Activated CD4-positive, alpha-beta memory T cell treated with anti-CD3 and anti-CD28 coated beads for 36 hours (primary cell): ENCODE measurements at regions of chr2 and their contacts with region 1.

Region 1: GRCh38 chr2:219388127-219388844 is 574 bp upstream of the DNPEP start:
- DNase-seq: peak; percentile 99
- H3K4me3 Mint-ChIP-seq: peak overlapping the region; percentile 69
- H3K27ac Mint-ChIP-seq: peak overlapping the region; percentile 66
- H3K4me1 Mint-ChIP-seq: peaks cover 16% of the 10 kb centered on the region
- H3K27me3 Mint-ChIP-seq: no peaks in the 10 kb centered on the region

Region 2: DNA sequence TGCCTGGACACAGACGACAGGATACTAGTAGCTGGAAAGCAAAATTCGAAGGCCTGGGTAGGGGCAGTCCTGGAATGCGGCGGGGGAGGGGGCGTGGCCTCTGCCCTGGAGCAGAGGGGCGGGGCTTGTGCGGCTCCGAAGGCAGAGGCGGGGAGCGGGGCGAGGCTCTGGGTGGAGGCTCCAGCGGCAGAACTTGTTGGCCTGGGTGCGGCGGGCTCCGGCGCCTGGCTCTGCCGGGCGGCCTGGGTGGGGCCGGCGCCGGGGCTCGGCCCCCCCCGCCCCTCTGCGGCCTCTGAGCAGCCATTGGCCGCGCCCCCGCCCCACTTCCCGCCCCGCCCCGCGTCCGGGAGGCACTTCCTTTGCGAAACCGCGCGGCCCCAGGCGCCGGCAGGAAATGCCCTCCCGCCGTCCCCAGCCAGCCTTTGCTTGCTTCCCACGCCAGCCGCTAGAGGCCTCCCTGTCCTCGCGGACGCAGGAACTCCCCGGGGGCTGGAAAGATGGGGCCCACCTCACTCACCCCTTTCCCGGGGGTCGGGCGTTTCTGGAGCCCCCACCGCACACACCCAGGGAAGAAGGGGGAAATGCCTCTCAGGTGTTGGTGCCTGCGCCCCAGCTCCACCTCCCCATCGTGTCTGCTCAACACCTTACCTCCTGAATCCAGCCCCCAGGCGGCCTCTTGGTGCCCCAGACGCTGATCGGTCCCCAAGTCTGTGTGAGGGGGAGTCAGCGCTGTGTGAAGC is 981.9 kb before region 1 on chr2:
- CTCF ChIA-PET with region 1: no interaction called
- POLR2A ChIA-PET with region 1: no interaction called
- intact Hi-C with region 1: loop called (anchors 5 kb)
- DNase-seq: peak; percentile 97
- H3K4me3 Mint-ChIP-seq: peak overlapping the region; percentile 71
- H3K27ac Mint-ChIP-seq: peak overlapping the region; percentile 81
- H3K4me1 Mint-ChIP-seq: peaks cover 42% of the 10 kb centered on the region
- H3K27me3 Mint-ChIP-seq: peaks cover 5% of the 10 kb centered on the region

Region 3: DNA sequence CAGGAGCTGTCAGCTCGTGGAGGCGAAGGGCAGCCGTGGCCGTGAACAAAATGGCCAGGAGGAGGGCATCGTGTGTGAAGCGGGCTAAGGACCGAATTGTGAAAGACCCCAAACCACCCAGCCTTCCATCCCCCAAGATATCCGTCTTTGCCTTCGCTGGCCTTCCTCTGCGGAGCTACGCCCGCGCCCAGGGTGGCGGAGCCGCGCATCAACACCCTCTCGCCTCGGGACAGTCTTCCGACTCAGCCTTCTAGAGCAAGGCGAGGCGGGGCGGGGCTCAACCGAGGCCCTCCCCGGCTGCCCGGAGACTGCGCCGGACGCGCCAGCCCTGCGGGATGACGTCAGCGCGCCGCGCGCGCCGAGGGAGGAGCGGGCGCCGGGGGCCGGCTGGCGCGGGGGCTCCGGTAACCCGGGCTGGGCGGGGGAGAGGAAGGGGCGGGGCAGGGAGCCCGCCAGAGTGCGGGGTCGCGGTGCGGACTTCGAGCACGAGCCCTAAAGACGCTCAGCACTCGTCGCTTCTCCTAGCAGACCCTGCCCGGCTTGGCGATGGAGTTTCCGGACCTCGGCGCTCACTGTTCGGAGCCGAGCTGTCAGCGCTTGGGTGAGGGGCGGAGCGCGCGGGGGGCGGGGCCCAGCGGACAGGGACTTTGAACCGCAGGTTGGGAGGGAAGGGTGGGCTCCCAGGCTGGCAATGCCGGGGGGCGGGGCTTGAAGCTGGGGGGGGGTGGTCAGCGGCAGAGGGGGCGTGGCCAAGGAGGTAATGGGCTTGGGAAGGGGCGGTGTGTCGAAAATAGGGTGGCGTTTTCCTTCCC is 181.6 kb before region 1 on chr2 and contains the start of gene ZFAND2B:
- CTCF ChIA-PET with region 1: interaction called, 3 read pairs
- POLR2A ChIA-PET with region 1: interaction called, 3 read pairs
- intact Hi-C with region 1: loop called (anchors 1 kb)
- DNase-seq: peak; percentile 95
- H3K4me3 Mint-ChIP-seq: peak within 1 kb of the TSS; percentile 94
- H3K27ac Mint-ChIP-seq: peak within 1 kb of the TSS; percentile 99
- H3K4me1 Mint-ChIP-seq: peaks cover 32% of the 10 kb centered on the region
- H3K27me3 Mint-ChIP-seq: no peaks in the 10 kb centered on the region
- total RNA-seq, gene ZFAND2B: 31.9 to 34.4 TPM

Region 4: DNA sequence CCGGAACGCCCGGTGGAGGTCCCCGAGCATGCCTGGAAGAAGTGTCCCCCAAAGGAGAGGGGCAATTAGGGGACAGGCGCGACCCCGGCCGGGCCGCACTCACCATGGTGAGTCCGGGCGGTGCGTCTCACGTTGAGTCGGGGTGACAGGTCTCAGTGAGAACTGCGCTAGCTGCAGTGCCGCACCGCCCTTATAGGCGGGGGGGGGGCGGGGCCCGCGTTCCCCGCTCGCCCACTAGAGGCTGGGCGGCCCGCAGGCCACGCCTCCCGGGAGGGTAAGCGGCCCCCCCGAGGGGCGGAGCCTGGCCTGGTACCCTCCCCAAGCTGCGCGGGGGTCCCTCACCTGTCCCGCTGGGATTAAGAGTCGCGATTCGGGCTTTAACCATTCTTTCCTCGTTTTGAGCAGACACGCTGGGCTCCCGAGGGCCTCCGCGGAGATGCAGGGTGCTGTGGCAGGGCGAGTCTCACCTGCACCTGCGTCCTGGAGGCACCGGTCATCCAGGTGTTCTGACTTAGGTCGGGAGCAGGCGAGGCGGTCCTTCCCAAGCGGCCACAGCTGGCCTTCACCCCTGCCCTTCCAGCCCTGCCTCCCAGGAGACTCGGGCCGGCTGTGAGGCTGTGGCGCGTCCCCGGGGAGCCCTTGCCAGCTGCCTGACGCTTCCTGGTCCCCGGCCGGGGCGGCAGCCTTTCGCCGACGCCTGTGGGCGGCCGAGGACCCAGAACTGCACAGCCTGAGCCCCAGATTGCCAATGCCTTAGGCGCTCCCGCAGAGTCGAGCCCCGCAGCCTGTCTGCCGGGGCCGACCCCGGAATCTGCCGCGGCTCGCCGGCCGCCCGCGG is 134.3 kb before region 1 on chr2 and contains the start of gene TUBA4A:
- CTCF ChIA-PET with region 1: interaction called, 3 read pairs
- POLR2A ChIA-PET with region 1: interaction called, 5 read pairs
- intact Hi-C with region 1: loop called (anchors 1 kb)
- DNase-seq: peak; percentile 92
- H3K4me3 Mint-ChIP-seq: peak within 1 kb of the TSS; percentile 86
- H3K27ac Mint-ChIP-seq: peak within 1 kb of the TSS; percentile 97
- H3K4me1 Mint-ChIP-seq: peaks cover 49% of the 10 kb centered on the region
- H3K27me3 Mint-ChIP-seq: no peaks in the 10 kb centered on the region
- total RNA-seq, gene TUBA4A: 219 to 229 TPM

Region 5: GRCh38 chr2:219402665-219403515 is 14.6 kb after region 1 on chr2:
- CTCF ChIA-PET with region 1: interaction called, 20 read pairs
- POLR2A ChIA-PET with region 1: interaction called, 4 read pairs
- intact Hi-C with region 1: no loop called
- DNase-seq: peak; percentile 70
- H3K4me3 Mint-ChIP-seq: no peak overlapping the region
- H3K27ac Mint-ChIP-seq: no peak overlapping the region
- H3K4me1 Mint-ChIP-seq: no peaks in the 10 kb centered on the region
- H3K27me3 Mint-ChIP-seq: peaks cover 5% of the 10 kb centered on the region

Region 6: GRCh38 chr2:219430633-219431615 is 42.6 kb after region 1 on chr2:
- CTCF ChIA-PET with region 1: no interaction called
- POLR2A ChIA-PET with region 1: no interaction called
- intact Hi-C with region 1: no loop called
- DNase-seq: no peak
- H3K4me3 Mint-ChIP-seq: no peak overlapping the region
- H3K27ac Mint-ChIP-seq: no peak overlapping the region
- H3K4me1 Mint-ChIP-seq: no peaks in the 10 kb centered on the region
- H3K27me3 Mint-ChIP-seq: peaks cover 22% of the 10 kb centered on the region

Region 7: DNA sequence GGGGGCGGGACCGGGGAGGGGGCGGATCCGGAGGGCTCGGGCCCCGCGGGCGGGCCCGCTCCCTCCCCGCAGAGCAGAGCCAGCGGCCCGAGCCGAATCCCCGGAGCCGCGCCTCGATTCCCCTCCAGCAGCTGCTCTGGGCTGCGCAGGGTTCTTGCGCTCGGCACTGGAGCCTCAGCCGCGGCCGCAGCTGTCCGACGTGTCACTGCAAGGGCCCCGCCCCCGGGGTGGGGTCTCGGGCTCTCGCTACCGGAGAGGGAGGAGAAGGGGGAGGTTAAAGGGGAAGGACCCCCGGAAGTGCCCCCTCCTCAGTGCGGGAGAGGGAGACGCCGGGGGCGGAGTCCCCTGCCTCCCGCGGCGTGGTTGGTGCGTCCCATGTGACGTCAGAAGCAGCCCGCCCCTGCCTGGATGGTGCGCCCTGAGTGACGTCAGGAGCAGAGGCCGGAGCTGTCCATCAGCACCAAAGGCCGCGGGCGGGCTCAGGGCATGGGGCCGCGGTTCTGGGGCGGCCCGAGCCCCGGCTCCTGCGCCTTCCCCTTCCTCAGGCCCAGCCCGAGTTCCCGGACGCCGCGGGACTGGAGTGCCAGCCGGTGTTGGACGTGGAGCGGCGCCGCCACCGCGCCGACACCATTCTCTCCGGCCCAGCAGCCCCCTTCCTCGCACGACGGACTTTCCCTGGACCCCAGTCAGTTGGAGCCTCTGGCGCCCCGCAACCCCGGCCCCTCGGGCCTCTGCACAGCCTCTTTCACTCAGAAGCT is 155.5 kb after region 1 on chr2 and contains the starts of genes CHPF and TMEM198:
- CTCF ChIA-PET with region 1: interaction called, 6 read pairs
- POLR2A ChIA-PET with region 1: interaction called, 6 read pairs
- intact Hi-C with region 1: loop called (anchors 1 kb)
- DNase-seq: peak; percentile 98
- H3K4me3 Mint-ChIP-seq: peak within 1 kb of the TSS; percentile 92
- H3K27ac Mint-ChIP-seq: peak within 1 kb of the TSS; percentile 65
- H3K4me1 Mint-ChIP-seq: peaks cover 22% of the 10 kb centered on the region
- H3K27me3 Mint-ChIP-seq: peaks cover 5% of the 10 kb centered on the region
- total RNA-seq, gene CHPF: 19.9 to 21.0 TPM
- total RNA-seq, gene TMEM198: 2.6 to 4.4 TPM

Region 8: GRCh38 chr2:219597552-219598307 is 209.4 kb after region 1 on chr2 and contains the start of gene STK11IP:
- CTCF ChIA-PET with region 1: no interaction called
- POLR2A ChIA-PET with region 1: interaction called, 4 read pairs
- intact Hi-C with region 1: loop called (anchors 1 kb)
- DNase-seq: peak; percentile 96
- H3K4me3 Mint-ChIP-seq: peak within 1 kb of the TSS; percentile 88
- H3K27ac Mint-ChIP-seq: peak within 1 kb of the TSS; percentile 93
- H3K4me1 Mint-ChIP-seq: peaks cover 10% of the 10 kb centered on the region
- H3K27me3 Mint-ChIP-seq: peaks cover 4% of the 10 kb centered on the region
- total RNA-seq, gene STK11IP: 28.7 to 28.9 TPM